Right ventricle myocardium superior (tissue), 1 donor: ENCODE measurements at regions of chr20 and their contacts with region 1.

Region 1: GRCh38 chr20:46757754-46758678 is 48.6 kb downstream of the SLC2A10 start:
- DNase-seq: peak; percentile 69
- ATAC-seq: peak; percentile 61

Region 2: DNA sequence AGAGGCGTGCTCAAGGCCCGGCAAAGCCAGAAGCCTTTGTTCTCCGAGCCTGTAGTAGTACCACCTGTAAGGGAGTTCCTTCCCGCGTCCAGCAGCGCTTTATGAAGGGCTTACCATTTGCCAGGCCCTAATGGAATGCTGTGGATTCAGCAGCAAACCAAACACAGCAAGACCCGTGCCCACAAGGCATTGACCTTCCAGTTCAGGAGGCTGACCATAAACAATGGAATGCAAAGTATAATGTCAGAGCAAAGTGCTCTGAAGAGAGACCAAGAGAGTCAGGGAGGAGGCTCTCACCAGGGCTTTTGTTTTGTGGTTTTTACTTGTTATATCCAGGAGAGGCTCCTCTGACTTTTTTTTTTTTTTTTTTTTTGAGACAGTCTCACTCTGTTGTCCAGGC is 388.7 kb after region 1 on chr20:
- intact Hi-C with region 1: loop called (anchors 5 kb)
- DNase-seq: no peak
- ATAC-seq: no peak